Activated CD8-positive, alpha-beta memory T cell treated with anti-CD3 and anti-CD28 coated beads, Interleukin-2, amount 10 ng/mL, durations not matched to agents 7 days and 5 days (primary cell): ENCODE measurements at regions of chr15 and their contacts with region 1.

Region 1: DNA sequence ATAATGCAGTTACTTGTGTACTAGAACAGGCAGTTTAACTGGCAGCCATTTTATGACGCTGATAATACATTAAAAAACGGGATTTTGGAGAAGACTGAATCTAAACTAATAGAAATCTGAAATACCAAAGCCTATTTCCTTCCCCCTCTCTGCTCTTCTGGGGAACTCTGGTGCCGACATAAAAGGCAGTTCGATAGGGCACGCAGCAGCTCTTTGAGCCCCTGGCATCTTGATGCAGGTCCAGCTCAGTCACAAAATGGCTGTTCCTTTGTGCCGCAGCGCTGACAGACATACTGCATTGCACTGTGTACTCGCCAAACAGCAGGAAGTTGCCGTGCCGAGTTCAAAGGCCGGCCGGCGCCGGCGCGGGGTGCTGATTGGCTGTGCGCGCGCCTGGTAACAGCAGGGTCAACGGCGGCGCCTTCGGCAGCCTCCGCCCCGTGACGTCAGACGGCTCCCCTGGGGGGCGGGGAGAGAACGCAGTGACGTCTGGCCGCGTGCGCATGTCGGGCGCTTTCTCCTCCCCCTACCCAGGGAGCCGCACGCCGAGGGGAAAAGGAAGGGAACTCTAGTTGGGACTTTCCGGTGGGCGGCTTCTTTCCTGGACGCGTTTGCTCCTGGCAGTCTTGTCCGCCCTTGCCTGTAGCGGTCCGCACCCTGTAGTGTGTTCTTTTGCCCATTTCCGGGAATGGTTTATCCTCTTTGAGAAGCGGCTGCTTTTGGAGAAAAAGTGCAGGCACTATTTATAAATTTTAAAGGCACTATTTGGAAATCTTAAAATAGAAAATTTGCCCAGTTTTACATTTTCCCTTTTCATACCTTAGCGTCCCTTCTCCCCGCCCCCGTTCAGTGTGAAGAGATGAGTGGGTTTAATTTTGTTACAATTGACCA is 4.1 kb downstream of the CHD2 start:
- DNase-seq: peak; percentile 100
- ATAC-seq: peak; percentile 87
- H3K4me3 Mint-ChIP-seq: peak overlapping the region; percentile 79
- H3K27ac Mint-ChIP-seq: peak overlapping the region; percentile 99
- H3K4me1 Mint-ChIP-seq: peaks cover 51% of the 10 kb centered on the region
- H3K27me3 Mint-ChIP-seq: no peaks in the 10 kb centered on the region

Region 2: DNA sequence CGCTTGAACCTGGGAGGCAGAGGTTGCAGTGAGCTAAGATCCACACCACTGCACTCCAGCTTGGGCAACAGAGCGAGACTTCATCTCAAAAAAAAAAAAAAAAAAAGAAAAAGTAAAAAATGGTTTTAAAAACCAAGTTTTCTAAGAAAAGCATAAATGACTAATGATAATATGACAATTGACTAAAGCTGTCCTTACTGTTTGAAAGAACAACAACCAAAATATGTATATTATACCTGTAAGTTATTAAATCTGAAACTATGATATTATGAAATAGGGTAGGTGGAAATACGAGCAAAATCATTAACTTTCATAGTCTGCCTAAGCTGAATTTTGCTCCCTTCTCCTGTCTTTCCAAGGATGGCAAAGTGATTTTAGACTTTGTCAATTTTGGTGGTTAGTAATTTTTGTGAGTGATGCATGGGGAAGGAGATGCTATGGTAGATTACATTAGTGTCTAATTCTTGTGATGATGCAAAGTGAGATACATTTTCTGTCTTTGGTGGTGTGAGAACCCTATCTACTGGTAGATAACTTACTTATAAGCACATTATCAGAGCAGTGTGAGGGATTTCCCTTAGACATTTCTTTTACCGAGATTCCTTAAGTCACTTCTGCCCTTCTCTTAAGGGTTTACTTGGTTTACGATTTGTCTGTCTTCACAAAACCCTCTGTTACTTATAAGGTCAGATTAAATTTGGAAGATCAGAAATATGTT is 14.6 kb before region 1 on chr15:
- CTCF ChIA-PET with region 1: interaction called, 65 read pairs
- DNase-seq: no peak
- ATAC-seq: peak; percentile 57
- H3K4me3 Mint-ChIP-seq: peak overlapping the region; percentile 55
- H3K27ac Mint-ChIP-seq: peak overlapping the region; percentile 80
- H3K4me1 Mint-ChIP-seq: peaks cover 66% of the 10 kb centered on the region
- H3K27me3 Mint-ChIP-seq: no peaks in the 10 kb centered on the region

Region 3: GRCh38 chr15:92917606-92918407 is 13.6 kb after region 1 on chr15:
- CTCF ChIA-PET with region 1: interaction called, 23 read pairs
- DNase-seq: peak; percentile 96
- ATAC-seq: peak; percentile 54
- H3K4me3 Mint-ChIP-seq: peak overlapping the region; percentile 32
- H3K27ac Mint-ChIP-seq: peak overlapping the region; percentile 86
- H3K4me1 Mint-ChIP-seq: peaks cover 83% of the 10 kb centered on the region
- H3K27me3 Mint-ChIP-seq: no peaks in the 10 kb centered on the region